GM12878 (cell line): ENCODE measurements at regions of chr11 and their contacts with region 1.

Region 1: DNA sequence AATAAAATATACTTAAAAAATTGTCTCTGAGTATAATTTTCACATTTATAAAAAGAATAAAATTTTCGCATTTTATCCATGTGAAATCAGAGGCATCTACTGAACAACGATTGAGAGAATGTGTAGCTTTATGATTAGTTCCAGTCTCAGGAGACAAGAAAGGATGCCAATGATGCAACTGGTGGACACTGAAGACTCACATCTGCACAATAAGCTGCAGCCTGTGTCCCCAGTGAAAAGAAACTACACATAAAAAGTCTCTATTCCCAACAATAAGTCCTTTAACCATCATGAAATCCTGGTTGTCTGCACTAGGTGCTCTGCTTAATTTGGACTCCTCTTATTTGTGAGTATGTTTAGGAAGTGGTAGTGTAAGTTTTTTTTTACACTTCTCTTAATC is 22.0 kb downstream of the OR5AS1 start:
- DNase-seq: no peak
- ATAC-seq: no peak
- H3K4me3 ChIP-seq: no peak overlapping the region
- H3K27ac ChIP-seq: no peak overlapping the region
- H3K4me1 ChIP-seq: no peaks in the 10 kb centered on the region
- H3K27me3 ChIP-seq: no peaks in the 10 kb centered on the region
- CTCF ChIP-seq: no peak
- EP300 ChIP-seq: no peak
- POLR2A ChIP-seq: no peak
- RAD21 ChIP-seq: no peak

Region 2: DNA sequence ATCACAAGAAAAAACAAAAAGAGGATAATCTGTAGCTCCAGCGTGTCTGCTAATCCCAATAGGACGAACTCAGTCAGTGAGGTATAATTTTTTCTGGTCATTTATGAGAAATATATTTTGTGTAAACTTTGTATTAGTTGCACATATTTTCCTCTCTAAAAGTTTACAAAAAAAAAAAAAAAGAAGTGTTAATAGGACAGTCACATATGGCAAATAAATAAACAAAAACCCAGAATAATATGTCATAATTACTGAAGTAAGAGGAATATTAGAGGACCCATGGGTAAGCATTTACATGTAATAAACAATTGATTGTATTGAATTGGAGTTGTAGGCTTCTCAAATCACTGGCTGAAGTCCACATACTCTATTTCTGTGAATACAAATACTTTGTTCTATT is 55.0 kb before region 1 on chr11 and contains the start of gene OR5F1:
- CTCF ChIA-PET with region 1: no interaction called
- POLR2A ChIA-PET with region 1: no interaction called
- RAD21 ChIA-PET with region 1: no interaction called
- SMC1A ChIA-PET with region 1: no interaction called
- in situ Hi-C with region 1: loop called (anchors 10 kb)
- intact Hi-C with region 1: no loop called
- DNase-seq: no peak
- ATAC-seq: no peak
- H3K4me3 ChIP-seq: no peak within 1 kb of the TSS
- H3K27ac ChIP-seq: no peak within 1 kb of the TSS
- H3K4me1 ChIP-seq: no peaks in the 10 kb centered on the region
- H3K27me3 ChIP-seq: no peaks in the 10 kb centered on the region
- CTCF ChIP-seq: no peak
- EP300 ChIP-seq: no peak
- POLR2A ChIP-seq: no peak
- RAD21 ChIP-seq: no peak
- polyA plus RNA-seq, gene OR5F1: not detected